Activated CD4-positive, alpha-beta memory T cell treated with anti-CD3 and anti-CD28 coated beads for 36 hours (primary cell): ENCODE measurements at regions of chr19 and their contacts with region 1.

Region 1: DNA sequence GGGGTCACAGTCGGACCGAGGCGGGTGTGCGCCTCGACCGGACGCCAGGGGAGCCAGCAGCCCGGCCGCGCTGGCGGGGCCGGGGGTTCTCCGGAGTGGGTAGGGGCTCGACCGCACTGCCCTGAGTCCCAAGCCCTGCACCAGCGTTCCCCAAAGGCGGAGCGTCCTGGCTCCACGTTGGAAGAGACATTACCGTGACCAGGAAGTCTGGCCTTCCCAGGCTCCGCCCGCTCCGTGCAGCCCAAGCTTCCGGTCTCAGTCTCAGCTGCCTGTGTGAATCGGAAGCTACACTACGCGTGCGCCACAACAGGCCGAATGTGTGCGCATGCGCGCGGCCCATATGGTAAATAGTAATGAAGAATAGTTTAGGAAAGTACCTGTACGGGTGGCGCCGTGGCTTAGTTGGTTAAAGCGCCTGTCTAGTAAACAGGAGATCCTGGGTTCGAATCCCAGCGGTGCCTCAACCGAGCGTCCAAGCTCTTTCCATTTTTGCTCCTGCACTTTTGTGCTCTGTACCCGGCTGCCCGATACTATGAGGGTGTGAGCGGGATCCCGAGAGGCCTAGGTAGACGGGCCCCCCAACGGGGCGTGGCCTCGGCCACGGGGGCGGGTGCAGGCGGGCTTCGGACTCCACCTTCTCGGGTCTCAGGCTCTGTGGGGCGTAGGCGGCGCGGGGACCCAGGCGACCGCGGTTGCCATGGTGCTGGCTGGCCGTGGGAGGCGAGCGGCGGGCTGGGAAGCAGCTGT is 17.3 kb upstream of the LRP3 start:
- DNase-seq: peak; percentile 98
- H3K4me3 Mint-ChIP-seq: peak overlapping the region; percentile 96
- H3K27ac Mint-ChIP-seq: peak overlapping the region; percentile 96
- H3K4me1 Mint-ChIP-seq: peaks cover 30% of the 10 kb centered on the region
- H3K27me3 Mint-ChIP-seq: peaks cover 3% of the 10 kb centered on the region

Region 2: GRCh38 chr19:32691291-32691951 is 485.4 kb before region 1 on chr19 and contains the start of gene NUDT19:
- CTCF ChIA-PET with region 1: interaction called, 3 read pairs
- POLR2A ChIA-PET with region 1: no interaction called
- intact Hi-C with region 1: loop called (anchors 5 kb)
- DNase-seq: peak; percentile 90
- H3K4me3 Mint-ChIP-seq: peak within 1 kb of the TSS; percentile 90
- H3K27ac Mint-ChIP-seq: peak within 1 kb of the TSS; percentile 87
- H3K4me1 Mint-ChIP-seq: peaks cover 47% of the 10 kb centered on the region
- H3K27me3 Mint-ChIP-seq: no peaks in the 10 kb centered on the region
- total RNA-seq, gene NUDT19: 14.9 to 15.0 TPM

Region 3: GRCh38 chr19:33125929-33126388 is 50.9 kb before region 1 on chr19:
- CTCF ChIA-PET with region 1: interaction called, 23 read pairs
- POLR2A ChIA-PET with region 1: no interaction called
- intact Hi-C with region 1: no loop called
- DNase-seq: peak; percentile 65
- H3K4me3 Mint-ChIP-seq: no peak overlapping the region
- H3K27ac Mint-ChIP-seq: no peak overlapping the region
- H3K4me1 Mint-ChIP-seq: no peaks in the 10 kb centered on the region
- H3K27me3 Mint-ChIP-seq: no peaks in the 10 kb centered on the region

Region 4: DNA sequence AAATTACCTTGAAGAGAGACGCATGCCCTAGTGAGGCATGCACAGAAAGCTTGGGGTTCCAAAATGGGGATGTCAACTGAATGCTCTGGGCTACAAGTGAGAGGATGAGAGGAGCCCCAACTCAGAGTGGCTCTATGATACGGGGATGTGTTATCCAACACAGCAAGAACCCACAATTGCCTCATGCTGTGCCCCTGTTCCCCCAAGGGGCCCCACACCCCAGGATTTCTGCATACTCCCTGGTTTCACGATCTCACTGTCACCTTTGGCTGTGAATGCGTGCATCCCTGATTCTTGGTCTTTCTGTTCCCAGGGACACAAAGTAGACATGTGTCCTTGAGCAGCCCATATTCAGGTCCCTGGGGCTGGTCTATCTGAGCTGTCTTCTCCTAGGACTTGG is 15.6 kb before region 1 on chr19:
- CTCF ChIA-PET with region 1: interaction called, 34 read pairs
- POLR2A ChIA-PET with region 1: interaction called, 47 read pairs
- intact Hi-C with region 1: loop called (anchors 1 kb)
- DNase-seq: no peak
- H3K4me3 Mint-ChIP-seq: no peak overlapping the region
- H3K27ac Mint-ChIP-seq: peak overlapping the region; percentile 86
- H3K4me1 Mint-ChIP-seq: peaks cover 32% of the 10 kb centered on the region
- H3K27me3 Mint-ChIP-seq: no peaks in the 10 kb centered on the region

Region 5: DNA sequence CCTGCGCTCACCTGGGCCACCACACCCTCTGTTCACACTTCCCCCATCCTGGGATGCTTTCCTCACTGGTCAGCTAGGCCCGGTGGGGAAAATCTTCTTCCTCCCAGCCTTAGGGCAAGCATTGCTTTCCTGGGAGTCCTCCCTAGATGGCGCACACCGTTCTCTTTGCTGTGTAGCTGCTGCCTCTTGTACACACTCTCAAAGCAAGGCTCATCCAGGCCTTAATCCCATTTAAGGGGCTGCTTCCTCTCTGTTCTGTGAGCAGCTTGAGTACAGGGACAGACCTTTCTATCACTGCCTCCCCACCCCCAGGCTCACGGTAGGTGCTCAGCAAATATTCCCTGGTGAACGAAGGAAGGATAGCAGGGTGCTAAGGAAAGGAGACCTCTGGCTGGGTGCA is 37.8 kb after region 1 on chr19:
- CTCF ChIA-PET with region 1: no interaction called
- POLR2A ChIA-PET with region 1: no interaction called
- intact Hi-C with region 1: no loop called
- DNase-seq: no peak
- H3K4me3 Mint-ChIP-seq: no peak overlapping the region
- H3K27ac Mint-ChIP-seq: no peak overlapping the region
- H3K4me1 Mint-ChIP-seq: no peaks in the 10 kb centered on the region
- H3K27me3 Mint-ChIP-seq: no peaks in the 10 kb centered on the region

Region 6: DNA sequence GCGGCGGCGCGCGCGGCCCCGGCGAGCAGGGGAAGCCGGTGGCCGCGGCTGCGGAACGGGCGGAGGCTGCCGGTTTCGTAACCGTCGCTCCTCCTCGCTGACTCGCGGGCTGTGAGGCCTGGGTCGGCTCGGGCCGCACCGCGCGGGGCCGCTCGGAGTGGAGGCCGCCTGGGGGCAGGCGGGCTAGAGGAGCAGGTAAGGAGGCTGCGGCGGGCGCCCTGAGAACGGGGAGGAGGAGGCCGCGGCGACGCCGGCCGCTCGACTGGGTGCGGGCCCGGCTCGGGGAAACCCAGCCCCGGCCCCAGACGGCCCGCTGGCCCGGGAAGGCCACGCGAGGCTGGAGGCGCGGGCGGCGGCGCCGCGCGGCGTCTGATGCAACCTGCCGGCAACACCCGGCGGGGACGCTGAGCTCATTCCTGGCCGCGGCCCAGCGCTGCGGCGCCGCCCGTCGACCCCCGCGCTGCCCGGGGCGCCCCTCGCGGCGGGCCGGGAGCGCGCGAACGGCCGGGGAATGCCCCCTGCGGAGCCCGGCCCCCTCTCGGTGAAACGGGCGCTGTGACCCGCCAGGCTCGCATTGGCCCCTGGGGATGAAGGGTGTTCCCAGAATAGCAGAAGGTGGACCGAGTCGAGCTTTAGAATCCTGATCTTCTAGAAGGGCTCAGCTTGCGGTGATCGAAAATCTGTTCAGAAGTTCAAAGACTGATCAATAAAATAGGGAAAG is 197.0 kb after region 1 on chr19 and contains the start of gene CEBPG:
- CTCF ChIA-PET with region 1: interaction called, 4 read pairs
- POLR2A ChIA-PET with region 1: interaction called, 15 read pairs
- intact Hi-C with region 1: loop called (anchors 5 kb)
- DNase-seq: peak; percentile 66
- H3K4me3 Mint-ChIP-seq: peak within 1 kb of the TSS; percentile 87
- H3K27ac Mint-ChIP-seq: peak within 1 kb of the TSS; percentile 81
- H3K4me1 Mint-ChIP-seq: peaks cover 45% of the 10 kb centered on the region
- H3K27me3 Mint-ChIP-seq: no peaks in the 10 kb centered on the region
- total RNA-seq, gene CEBPG: 30.6 to 30.9 TPM

Region 7: GRCh38 chr19:34171877-34172660 is 995.2 kb after region 1 on chr19 and contains the start of gene LSM14A:
- CTCF ChIA-PET with region 1: no interaction called
- POLR2A ChIA-PET with region 1: no interaction called
- intact Hi-C with region 1: loop called (anchors 5 kb)
- DNase-seq: peak; percentile 93
- H3K4me3 Mint-ChIP-seq: peak within 1 kb of the TSS; percentile 92
- H3K27ac Mint-ChIP-seq: peak within 1 kb of the TSS; percentile 99
- H3K4me1 Mint-ChIP-seq: peaks cover 36% of the 10 kb centered on the region
- H3K27me3 Mint-ChIP-seq: no peaks in the 10 kb centered on the region
- total RNA-seq, gene LSM14A: 90.0 to 106 TPM